ENCODE measurements at regions of chr9 and their contacts with region 1.

Region 1: GRCh38 chr9:4077499-4078102 is 222.3 kb downstream of the GLIS3 start:
- DNase-seq: peak; percentile 59
- H3K4me3 ChIP-seq: no peak overlapping the region
- H3K27ac ChIP-seq: no peak overlapping the region
- H3K4me1 ChIP-seq: no peaks in the 10 kb centered on the region
- H3K27me3 ChIP-seq: no peaks in the 10 kb centered on the region
- CTCF ChIP-seq: peak; percentile 92 to 93

Region 2: DNA sequence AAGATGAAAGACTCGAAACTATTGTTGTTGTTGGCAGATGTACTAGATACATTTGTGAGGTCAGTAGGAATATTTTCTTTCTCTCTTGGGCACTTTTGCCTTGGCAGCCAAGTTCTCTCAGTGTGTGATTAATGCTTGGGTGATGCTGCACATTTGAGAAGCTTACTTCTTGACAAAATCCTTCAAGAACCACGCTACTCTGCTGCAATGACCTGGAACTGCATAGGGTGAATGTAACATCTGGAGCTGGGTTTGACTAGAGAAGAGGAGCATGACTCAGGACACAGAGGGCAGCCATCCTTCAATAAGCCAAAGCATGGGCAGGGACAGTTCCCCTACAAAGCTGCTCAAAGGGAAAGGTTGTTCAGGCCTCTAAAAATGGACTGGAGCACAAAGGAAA is 1158.3 kb before region 1 on chr9:
- CTCF ChIA-PET with region 1: no interaction called
- dilution Hi-C with region 1: no loop called
- in situ Hi-C with region 1: no loop called
- intact Hi-C with region 1: no loop called
- DNase-seq: no peak
- H3K4me3 ChIP-seq: no peak overlapping the region
- H3K27ac ChIP-seq: no peak overlapping the region
- H3K4me1 ChIP-seq: no peaks in the 10 kb centered on the region
- H3K27me3 ChIP-seq: peaks cover 2% of the 10 kb centered on the region
- CTCF ChIP-seq: no peak

Region 3: DNA sequence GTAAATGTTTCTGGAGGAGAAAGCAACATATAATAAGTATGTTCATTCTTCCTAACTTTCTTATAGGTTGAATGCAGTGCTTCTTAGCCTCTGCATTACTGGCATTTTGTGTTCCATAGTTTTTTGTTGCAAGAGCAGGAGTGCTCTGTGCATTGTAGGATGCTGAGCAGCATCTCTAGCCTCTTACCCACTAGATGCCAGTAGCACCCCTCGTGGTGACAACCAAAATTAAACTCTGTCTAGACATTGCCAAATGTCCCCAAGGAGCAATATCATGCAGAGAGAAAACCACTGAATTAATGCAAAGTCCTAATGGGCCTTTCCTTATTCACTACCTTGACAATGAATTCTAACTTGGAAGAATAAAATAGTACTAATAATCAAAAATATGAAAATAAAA is 75.3 kb after region 1 on chr9:
- CTCF ChIA-PET with region 1: no interaction called
- dilution Hi-C with region 1: no loop called
- in situ Hi-C with region 1: no loop called
- intact Hi-C with region 1: loop called (anchors 10 kb)
- DNase-seq: no peak
- H3K4me3 ChIP-seq: no peak overlapping the region
- H3K27ac ChIP-seq: no peak overlapping the region
- H3K4me1 ChIP-seq: no peaks in the 10 kb centered on the region
- H3K27me3 ChIP-seq: no peaks in the 10 kb centered on the region
- CTCF ChIP-seq: no peak

Region 4: GRCh38 chr9:4197548-4197947 is 119.9 kb after region 1 on chr9:
- CTCF ChIA-PET with region 1: no interaction called
- dilution Hi-C with region 1: no loop called
- in situ Hi-C with region 1: no loop called
- intact Hi-C with region 1: loop called (anchors 1 kb)
- DNase-seq: peak; percentile 34
- H3K4me3 ChIP-seq: no peak overlapping the region
- H3K27ac ChIP-seq: no peak overlapping the region
- H3K4me1 ChIP-seq: no peaks in the 10 kb centered on the region
- H3K27me3 ChIP-seq: no peaks in the 10 kb centered on the region
- CTCF ChIP-seq: peak; percentile 65 to 69

Region 5: GRCh38 chr9:4228606-4229005 is 151.0 kb after region 1 on chr9:
- CTCF ChIA-PET with region 1: interaction called, 5 read pairs
- dilution Hi-C with region 1: no loop called
- in situ Hi-C with region 1: loop called in 1 of 2 experiments (anchors 25 kb)
- intact Hi-C with region 1: loop called (anchors 1 kb)
- DNase-seq: peak; percentile 20
- H3K4me3 ChIP-seq: no peak overlapping the region
- H3K27ac ChIP-seq: no peak overlapping the region
- H3K4me1 ChIP-seq: peaks cover 16% of the 10 kb centered on the region
- H3K27me3 ChIP-seq: no peaks in the 10 kb centered on the region
- CTCF ChIP-seq: peak; percentile 53 to 67

Region 6: DNA sequence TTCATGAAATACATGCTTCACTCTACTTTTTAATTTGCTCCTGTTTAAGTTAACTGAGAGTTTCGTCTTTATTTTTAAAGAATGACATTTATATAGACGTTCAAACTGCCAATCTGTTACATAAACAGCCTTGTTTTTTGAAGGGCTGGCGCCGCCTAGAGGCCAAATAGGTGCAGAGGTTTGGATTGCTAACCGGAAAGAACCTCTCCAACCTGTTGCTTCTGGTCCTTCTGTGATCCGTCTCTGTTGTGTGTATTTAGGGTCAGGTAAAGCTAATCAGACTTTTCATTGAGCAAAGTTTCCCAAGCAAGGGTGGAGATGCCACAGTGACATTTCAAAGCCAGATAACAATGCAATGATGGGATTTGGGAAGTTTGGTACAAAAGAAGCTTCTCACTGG is 261.8 kb after region 1 on chr9:
- CTCF ChIA-PET with region 1: no interaction called
- dilution Hi-C with region 1: no loop called
- in situ Hi-C with region 1: loop called in 1 of 2 experiments (anchors 25 kb)
- intact Hi-C with region 1: loop called (anchors 1 kb)
- DNase-seq: peak; percentile 80
- H3K4me3 ChIP-seq: no peak overlapping the region
- H3K27ac ChIP-seq: no peak overlapping the region
- H3K4me1 ChIP-seq: peaks cover 7% of the 10 kb centered on the region
- H3K27me3 ChIP-seq: no peaks in the 10 kb centered on the region
- CTCF ChIP-seq: peak; percentile 96 to 99

Region 7: DNA sequence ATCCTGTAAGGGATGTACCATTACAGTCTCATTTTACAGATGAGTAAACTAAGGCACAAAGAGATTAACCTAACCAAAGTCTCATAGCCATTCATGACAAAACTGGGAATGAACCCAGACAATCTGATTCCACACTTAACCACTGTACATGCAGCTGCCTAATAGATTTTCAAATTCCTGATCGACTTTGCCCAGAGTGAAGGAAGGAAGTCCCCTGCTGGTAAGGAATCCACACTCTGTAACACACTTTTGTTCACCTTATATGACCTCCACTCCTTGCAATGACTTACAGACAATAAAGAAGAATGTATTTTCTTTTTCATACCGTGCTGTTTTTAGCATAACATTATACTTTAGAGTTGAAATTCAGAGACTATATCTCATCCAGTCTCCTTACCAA is 553.2 kb after region 1 on chr9:
- CTCF ChIA-PET with region 1: no interaction called
- dilution Hi-C with region 1: no loop called
- in situ Hi-C with region 1: no loop called
- intact Hi-C with region 1: no loop called
- DNase-seq: no peak
- H3K4me3 ChIP-seq: no peak overlapping the region
- H3K27ac ChIP-seq: no peak overlapping the region
- H3K4me1 ChIP-seq: no peaks in the 10 kb centered on the region
- H3K27me3 ChIP-seq: peaks cover 2% of the 10 kb centered on the region
- CTCF ChIP-seq: no peak

Measured in mammary epithelial cell (primary cell).